ENCODE measurements at regions of chr3 and their contacts with region 1.

Region 1: DNA sequence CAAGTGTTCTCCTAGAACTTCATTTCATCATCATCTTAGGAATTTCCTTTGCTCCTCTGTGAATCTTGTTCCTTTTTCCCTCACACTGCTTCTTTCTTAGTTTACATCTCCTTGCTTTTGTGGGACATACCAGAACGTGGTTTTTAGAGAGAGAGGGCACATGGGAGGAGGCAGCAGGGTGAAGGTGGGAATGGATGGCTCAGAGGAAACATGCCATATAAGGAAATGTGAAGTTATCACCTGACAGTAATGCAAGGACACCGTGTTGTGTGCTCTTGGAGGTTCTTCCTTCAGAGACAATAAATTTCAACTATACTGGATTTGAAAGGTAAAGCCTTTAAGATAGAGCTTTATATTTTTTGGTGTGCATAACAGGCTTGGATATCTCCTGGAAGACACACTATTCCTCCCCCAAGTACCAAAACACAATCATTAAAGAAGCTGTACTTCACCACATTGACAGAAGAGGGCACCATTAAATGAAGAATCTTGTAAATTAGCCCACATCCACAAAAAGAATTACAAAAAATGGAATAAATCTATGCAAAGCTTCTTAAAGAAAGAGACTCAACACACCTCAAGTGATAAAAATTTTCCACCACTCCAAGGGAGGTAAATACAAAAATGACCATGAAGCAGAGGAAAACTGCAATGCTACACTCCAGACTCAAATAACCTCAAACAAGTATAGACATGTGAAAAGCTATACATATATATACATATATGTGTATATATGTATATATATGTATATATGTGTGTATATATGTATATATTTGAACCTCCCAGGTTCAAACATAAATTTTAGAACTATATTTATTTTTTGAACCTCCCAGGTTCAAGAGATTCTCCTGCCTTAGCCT is 26.1 kb downstream of the RPL39L start:
- DNase-seq: no peak
- H3K4me3 Mint-ChIP-seq: no peak overlapping the region
- H3K27ac Mint-ChIP-seq: no peak overlapping the region
- H3K4me1 Mint-ChIP-seq: peaks cover 7% of the 10 kb centered on the region
- H3K27me3 Mint-ChIP-seq: no peaks in the 10 kb centered on the region

Region 2: GRCh38 chr3:187101184-187102072 is 11.7 kb before region 1 on chr3:
- CTCF ChIA-PET with region 1: interaction called, 48 read pairs
- POLR2A ChIA-PET with region 1: interaction called, 6 read pairs
- DNase-seq: peak; percentile 64
- H3K4me3 Mint-ChIP-seq: peak overlapping the region; percentile 56
- H3K27ac Mint-ChIP-seq: peak overlapping the region; percentile 44
- H3K4me1 Mint-ChIP-seq: peaks cover 56% of the 10 kb centered on the region
- H3K27me3 Mint-ChIP-seq: peaks cover 6% of the 10 kb centered on the region

Region 3: DNA sequence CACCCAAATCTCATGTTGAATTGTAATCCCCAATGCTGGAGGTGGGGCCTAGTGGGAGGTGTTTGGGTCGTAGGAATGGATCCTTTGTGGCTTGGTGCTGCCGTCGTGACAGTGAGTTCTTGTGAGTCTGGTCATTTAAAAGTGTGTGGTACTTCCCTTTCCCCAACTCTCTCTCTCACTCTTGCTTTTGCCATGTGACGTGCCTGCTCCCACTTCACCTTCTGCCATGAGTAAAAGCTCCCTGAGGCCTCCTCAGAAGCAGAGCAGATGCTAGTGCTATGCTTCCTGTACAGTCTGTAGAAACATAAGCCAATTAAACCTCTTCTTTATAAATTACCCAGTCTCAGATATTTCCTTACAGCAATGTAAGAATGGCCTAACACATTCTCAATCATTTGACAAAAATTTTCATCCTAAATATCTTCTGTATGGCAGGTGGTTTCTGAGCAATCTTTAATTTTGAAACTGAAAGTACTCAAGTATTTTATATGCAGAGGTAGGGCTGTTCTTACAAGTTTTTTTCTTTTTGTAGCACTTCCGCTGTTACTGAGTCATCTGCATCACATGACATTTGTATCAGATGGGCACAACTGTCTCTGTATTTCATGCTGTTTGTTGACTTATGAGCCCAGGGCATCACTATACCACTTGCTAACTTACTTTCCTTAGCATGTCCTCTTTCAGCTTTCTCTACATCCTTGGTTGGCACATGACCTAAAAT is 17.3 kb after region 1 on chr3:
- CTCF ChIA-PET with region 1: interaction called, 10 read pairs
- POLR2A ChIA-PET with region 1: interaction called, 5 read pairs
- DNase-seq: peak; percentile 47
- H3K4me3 Mint-ChIP-seq: peak overlapping the region; percentile 65
- H3K27ac Mint-ChIP-seq: peak overlapping the region; percentile 96
- H3K4me1 Mint-ChIP-seq: peaks cover 37% of the 10 kb centered on the region
- H3K27me3 Mint-ChIP-seq: no peaks in the 10 kb centered on the region

Region 4: DNA sequence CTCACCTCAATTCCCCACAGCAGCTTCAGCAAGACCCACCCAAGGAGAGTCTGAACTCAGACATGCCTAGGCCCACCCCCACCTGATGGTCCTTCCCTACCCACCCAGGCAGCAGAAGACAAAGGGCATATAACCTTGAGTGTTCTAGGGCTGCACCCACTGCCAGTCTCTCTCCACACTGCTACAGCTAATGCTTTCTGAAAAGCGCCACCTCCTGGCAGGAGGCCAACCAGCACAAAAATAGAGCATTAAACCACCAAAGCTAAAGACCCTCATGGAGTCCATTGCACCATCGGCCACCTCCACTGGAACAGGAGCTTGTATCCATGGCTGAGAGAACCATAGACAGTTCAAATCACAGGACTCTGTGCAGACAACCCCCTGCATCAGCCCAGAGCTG is 37.4 kb after region 1 on chr3:
- CTCF ChIA-PET with region 1: interaction called, 129 read pairs
- POLR2A ChIA-PET with region 1: interaction called, 5 read pairs
- DNase-seq: peak; percentile 71
- H3K4me3 Mint-ChIP-seq: no peak overlapping the region
- H3K27ac Mint-ChIP-seq: no peak overlapping the region
- H3K4me1 Mint-ChIP-seq: peaks cover 2% of the 10 kb centered on the region
- H3K27me3 Mint-ChIP-seq: peaks cover 49% of the 10 kb centered on the region

Region 5: GRCh38 chr3:187164885-187165543 is 51.9 kb after region 1 on chr3:
- CTCF ChIA-PET with region 1: interaction called, 115 read pairs
- POLR2A ChIA-PET with region 1: interaction called, 13 read pairs
- DNase-seq: peak; percentile 25
- H3K4me3 Mint-ChIP-seq: no peak overlapping the region
- H3K27ac Mint-ChIP-seq: no peak overlapping the region
- H3K4me1 Mint-ChIP-seq: peaks cover 4% of the 10 kb centered on the region
- H3K27me3 Mint-ChIP-seq: peaks cover 23% of the 10 kb centered on the region

Measured in activated CD4-positive, alpha-beta memory T cell treated with anti-CD3 and anti-CD28 coated beads, Interleukin-2, amount 10 ng/mL, durations not matched to agents 7 days and 5 days (primary cell).